ENCODE measurements at regions of chr22 and their contacts with region 1.

Region 1: DNA sequence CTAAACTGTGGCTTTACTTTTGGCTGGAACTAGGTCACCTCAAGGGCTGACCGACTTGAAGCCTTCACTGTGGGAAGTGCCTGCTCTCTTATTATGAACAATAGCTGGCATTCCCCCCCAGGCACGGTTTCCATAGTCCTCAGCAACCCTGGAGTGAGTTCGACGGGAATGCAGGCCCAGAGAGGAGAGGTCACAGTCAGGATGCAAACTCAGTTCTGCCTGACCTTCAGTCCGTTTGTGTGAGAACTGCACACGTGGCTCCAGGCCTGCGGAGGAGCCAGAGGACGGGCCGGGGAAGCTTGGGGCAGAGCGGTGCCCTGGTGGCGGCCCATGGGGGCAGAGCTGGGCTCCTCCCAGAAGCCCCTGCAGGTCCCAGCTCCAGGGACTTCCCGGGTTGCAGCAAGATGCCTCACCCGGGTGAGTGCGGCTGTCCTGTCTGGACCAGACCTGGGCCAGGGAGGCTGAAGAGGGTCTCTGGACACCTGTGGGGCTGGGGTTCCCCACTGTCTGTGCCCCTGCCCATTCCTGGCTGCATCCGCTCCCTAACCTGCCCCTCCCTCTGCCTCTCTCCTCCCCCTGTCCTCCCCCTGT is 17.2 kb downstream of the SLC25A18 start:
- DNase-seq: no peak
- H3K4me3 ChIP-seq: no peak overlapping the region
- H3K4me3 Mint-ChIP-seq: no peak overlapping the region
- H3K27ac ChIP-seq: no peak overlapping the region
- H3K27ac Mint-ChIP-seq: no peak overlapping the region
- H3K4me1 ChIP-seq: no peaks in the 10 kb centered on the region
- H3K4me1 Mint-ChIP-seq: no peaks in the 10 kb centered on the region
- H3K27me3 ChIP-seq: no peaks in the 10 kb centered on the region
- H3K27me3 Mint-ChIP-seq: peaks cover 0 to 8% of the 10 kb centered on the region in 2 donors

Region 2: GRCh38 chr22:17334059-17334458 is 246.5 kb before region 1 on chr22:
- CTCF ChIA-PET with region 1: no interaction called
- POLR2A ChIA-PET with region 1: interaction called, 11 read pairs
- DNase-seq: no peak
- H3K4me3 ChIP-seq: no peak overlapping the region
- H3K4me3 Mint-ChIP-seq: no peak overlapping the region
- H3K27ac ChIP-seq: no peak overlapping the region
- H3K27ac Mint-ChIP-seq: no peak overlapping the region
- H3K4me1 ChIP-seq: no peaks in the 10 kb centered on the region
- H3K4me1 Mint-ChIP-seq: no peaks in the 10 kb centered on the region
- H3K27me3 ChIP-seq: no peaks in the 10 kb centered on the region
- H3K27me3 Mint-ChIP-seq: peaks cover 6 to 9% of the 10 kb centered on the region in 2 donors

Region 3: GRCh38 chr22:17628304-17629166 is 48.0 kb after region 1 on chr22 and contains the start of gene ATP6V1E1:
- CTCF ChIA-PET with region 1: no interaction called
- POLR2A ChIA-PET with region 1: no interaction called
- DNase-seq: peak; percentile 92 to 97 (median 94)
- H3K4me3 ChIP-seq: peak within 1 kb of the TSS; percentile 100
- H3K4me3 Mint-ChIP-seq: peak within 1 kb of the TSS; percentile 93 to 99 (median 98)
- H3K27ac ChIP-seq: peak within 1 kb of the TSS; percentile 99
- H3K27ac Mint-ChIP-seq: peak within 1 kb of the TSS; percentile 95 to 99 (median 99)
- H3K4me1 ChIP-seq: peaks cover 22% of the 10 kb centered on the region
- H3K4me1 Mint-ChIP-seq: peaks cover 25 to 44% (median 41%) of the 10 kb centered on the region in 3 donors
- H3K27me3 ChIP-seq: no peaks in the 10 kb centered on the region
- H3K27me3 Mint-ChIP-seq: no peaks in the 10 kb centered on the region
- total RNA-seq, gene ATP6V1E1: 96.0 to 97.6 TPM

Region 4: GRCh38 chr22:17638432-17639246 is 58.1 kb after region 1 on chr22 and contains the start of gene BCL2L13:
- CTCF ChIA-PET with region 1: no interaction called
- POLR2A ChIA-PET with region 1: no interaction called
- DNase-seq: peak; percentile 83 to 92 (median 85)
- H3K4me3 ChIP-seq: peak within 1 kb of the TSS; percentile 85
- H3K4me3 Mint-ChIP-seq: peak within 1 kb of the TSS; percentile 87 to 97 (median 89)
- H3K27ac ChIP-seq: peak within 1 kb of the TSS; percentile 97
- H3K27ac Mint-ChIP-seq: peak within 1 kb of the TSS; percentile 95 to 100 (median 98)
- H3K4me1 ChIP-seq: peaks cover 25% of the 10 kb centered on the region
- H3K4me1 Mint-ChIP-seq: peaks cover 22 to 39% (median 29%) of the 10 kb centered on the region in 3 donors
- H3K27me3 ChIP-seq: no peaks in the 10 kb centered on the region
- H3K27me3 Mint-ChIP-seq: peaks cover 0 to 2% of the 10 kb centered on the region in 2 donors
- total RNA-seq, gene BCL2L13: 39.8 to 40.1 TPM